ENCODE measurements at regions of chr15 and their contacts with region 1.

Region 1: DNA sequence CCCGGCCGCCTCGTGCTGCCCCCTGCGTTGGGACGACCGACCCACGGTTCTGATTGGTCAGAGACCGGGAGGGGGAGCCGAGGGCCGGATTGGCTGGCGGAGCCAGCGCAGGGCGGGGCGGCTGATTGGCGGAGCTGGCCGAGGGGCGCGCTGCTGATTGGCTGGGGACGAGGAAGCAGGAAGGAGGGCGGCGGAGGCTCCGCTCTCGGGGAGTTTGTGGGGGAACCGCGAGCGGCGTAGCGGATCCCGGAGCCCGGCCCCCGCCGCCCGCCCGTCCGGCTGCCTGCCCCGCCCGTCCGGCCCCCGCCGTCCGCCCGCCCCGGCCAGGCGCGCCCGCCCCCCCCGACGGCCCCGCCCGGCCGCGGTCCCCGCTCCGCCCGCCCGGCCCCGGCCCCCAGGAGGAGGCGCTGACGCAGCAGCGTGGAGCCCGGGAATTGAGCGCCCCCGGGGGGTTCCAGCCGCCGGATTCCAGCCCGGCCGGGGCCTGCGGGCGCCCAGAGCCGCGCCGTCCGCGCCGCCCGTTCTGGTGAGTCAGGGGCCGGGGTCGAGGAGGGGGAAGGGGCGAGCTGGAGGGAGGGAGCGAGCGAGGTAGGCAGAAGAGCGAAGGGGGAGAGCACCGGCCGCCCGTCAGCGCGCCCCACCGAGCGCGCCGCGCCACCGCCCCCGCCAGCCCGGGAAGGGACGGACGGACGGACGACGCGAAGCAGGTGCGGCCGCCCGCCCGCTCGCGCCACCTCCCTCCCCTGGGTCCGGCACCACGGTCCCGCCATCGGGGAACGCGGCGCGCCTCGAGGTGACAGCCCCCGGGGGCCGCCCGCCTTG is at the start of gene BAHD1:
- DNase-seq: peak; percentile 93
- ATAC-seq: peak; percentile 92
- H3K4me3 Mint-ChIP-seq: peak within 1 kb of the TSS; percentile 88
- H3K27ac Mint-ChIP-seq: peak within 1 kb of the TSS; percentile 68
- H3K4me1 Mint-ChIP-seq: peaks cover 59% of the 10 kb centered on the region
- H3K27me3 Mint-ChIP-seq: peaks cover 22% of the 10 kb centered on the region
- CTCF ChIP-seq: no peak
- total RNA-seq, gene BAHD1: 27.5 and 28.4 TPM in 2 replicates

Region 2: GRCh38 chr15:40279437-40280141 is 161.4 kb before region 1 on chr15:
- CTCF ChIA-PET with region 1: no interaction called
- POLR2A ChIA-PET with region 1: no interaction called
- intact Hi-C with region 1: no loop called
- DNase-seq: peak; percentile 69
- ATAC-seq: peak; percentile 23
- H3K4me3 Mint-ChIP-seq: peak overlapping the region; percentile 4
- H3K27ac Mint-ChIP-seq: no peak overlapping the region
- H3K4me1 Mint-ChIP-seq: peaks cover 29% of the 10 kb centered on the region
- H3K27me3 Mint-ChIP-seq: peaks cover 5% of the 10 kb centered on the region
- CTCF ChIP-seq: peak; percentile 93

Region 3: GRCh38 chr15:40382580-40383456 is 58.1 kb before region 1 on chr15 and contains the start of gene KNSTRN:
- CTCF ChIA-PET with region 1: no interaction called
- POLR2A ChIA-PET with region 1: interaction called, 8 read pairs
- intact Hi-C with region 1: loop called (anchors 1 kb)
- DNase-seq: peak; percentile 83
- ATAC-seq: peak; percentile 99
- H3K4me3 Mint-ChIP-seq: peak within 1 kb of the TSS; percentile 96
- H3K27ac Mint-ChIP-seq: peak within 1 kb of the TSS; percentile 73
- H3K4me1 Mint-ChIP-seq: peaks cover 12% of the 10 kb centered on the region
- H3K27me3 Mint-ChIP-seq: no peaks in the 10 kb centered on the region
- CTCF ChIP-seq: no peak
- total RNA-seq, gene KNSTRN: 11.5 and 13.4 TPM in 2 replicates

Region 4: DNA sequence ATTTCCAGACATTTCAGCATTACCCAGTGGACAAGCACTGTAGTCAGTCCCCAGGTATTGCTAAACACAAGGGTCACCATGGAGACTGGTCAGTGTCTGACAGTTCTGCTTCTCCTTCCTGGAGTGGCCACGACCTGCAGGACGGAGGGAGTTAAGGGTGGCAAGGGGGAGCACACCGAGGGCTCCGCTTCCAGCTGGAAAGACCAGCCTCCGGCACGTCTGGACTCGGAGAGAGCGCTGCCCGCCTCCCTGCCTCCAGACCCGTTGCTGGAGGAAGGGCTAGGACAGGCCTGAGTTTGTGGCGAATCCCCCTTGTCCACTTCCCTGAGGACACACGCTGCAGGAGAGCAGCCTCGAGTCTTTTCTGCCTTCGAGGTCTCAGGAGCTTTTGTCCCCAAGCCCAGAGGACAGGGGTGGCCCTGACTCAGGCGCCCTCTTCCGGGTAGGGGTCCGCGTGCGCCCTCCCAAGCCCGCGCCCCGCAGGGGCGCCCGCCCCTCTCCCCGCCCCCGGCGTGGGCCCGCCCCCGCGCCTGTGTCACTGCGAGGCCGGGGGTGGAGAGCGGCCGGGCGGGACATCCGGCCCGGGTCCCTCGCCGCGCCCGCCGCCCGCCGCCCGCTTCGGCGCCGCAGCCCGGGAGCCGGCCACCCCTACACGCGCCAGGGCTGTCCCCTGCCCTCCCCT is 29.6 kb after region 1 on chr15 and contains the start of gene CHST14:
- CTCF ChIA-PET with region 1: no interaction called
- POLR2A ChIA-PET with region 1: interaction called, 5 read pairs
- intact Hi-C with region 1: loop called (anchors 1 kb)
- DNase-seq: peak; percentile 69
- ATAC-seq: peak; percentile 91
- H3K4me3 Mint-ChIP-seq: peak within 1 kb of the TSS; percentile 88
- H3K27ac Mint-ChIP-seq: peak within 1 kb of the TSS; percentile 77
- H3K4me1 Mint-ChIP-seq: peaks cover 10% of the 10 kb centered on the region
- H3K27me3 Mint-ChIP-seq: no peaks in the 10 kb centered on the region
- CTCF ChIP-seq: no peak
- total RNA-seq, gene CHST14: 10.1 and 10.2 TPM in 2 replicates

Region 5: DNA sequence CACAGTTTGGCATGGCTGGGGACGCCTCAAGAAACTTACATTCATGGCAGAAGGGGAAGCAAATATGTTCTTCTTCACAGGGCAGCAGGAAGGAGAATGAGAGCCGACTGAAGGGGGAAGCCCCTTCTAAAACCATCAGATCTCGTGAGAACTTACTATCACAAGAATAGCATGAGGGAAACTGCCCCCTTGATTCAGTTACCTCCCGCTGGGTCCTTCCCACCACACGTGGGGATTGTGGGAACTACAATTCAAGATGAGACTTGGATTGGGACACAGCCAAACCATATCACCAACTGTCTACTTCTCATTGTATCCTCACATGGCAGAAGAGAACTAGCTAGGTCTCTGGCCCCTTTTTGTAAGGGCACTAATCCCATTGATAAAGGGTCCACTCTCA is 93.4 kb after region 1 on chr15:
- CTCF ChIA-PET with region 1: no interaction called
- POLR2A ChIA-PET with region 1: no interaction called
- intact Hi-C with region 1: no loop called
- DNase-seq: no peak
- ATAC-seq: no peak
- H3K4me3 Mint-ChIP-seq: no peak overlapping the region
- H3K27ac Mint-ChIP-seq: no peak overlapping the region
- H3K4me1 Mint-ChIP-seq: peaks cover 12% of the 10 kb centered on the region
- H3K27me3 Mint-ChIP-seq: no peaks in the 10 kb centered on the region
- CTCF ChIP-seq: no peak

Region 6: GRCh38 chr15:40769274-40770146 is 328.6 kb after region 1 on chr15 and contains the start of gene C15orf62:
- CTCF ChIA-PET with region 1: no interaction called
- POLR2A ChIA-PET with region 1: no interaction called
- intact Hi-C with region 1: loop called (anchors 5 kb)
- DNase-seq: peak; percentile 81
- ATAC-seq: peak; percentile 84
- H3K4me3 Mint-ChIP-seq: peak within 1 kb of the TSS; percentile 82
- H3K27ac Mint-ChIP-seq: peak within 1 kb of the TSS; percentile 93
- H3K4me1 Mint-ChIP-seq: peaks cover 59% of the 10 kb centered on the region
- H3K27me3 Mint-ChIP-seq: no peaks in the 10 kb centered on the region
- CTCF ChIP-seq: no peak
- total RNA-seq, gene C15orf62: 5.7 and 6.5 TPM in 2 replicates